PC-9 (cell line): ENCODE measurements at regions of chr5 and their contacts with region 1.

Region 1: GRCh38 chr5:72467421-72468386 is 39.5 kb downstream of the ZNF366 start:
- DNase-seq: peak; percentile 42 to 83
- H3K4me3 ChIP-seq: peak overlapping the region; percentile 38
- H3K27ac ChIP-seq: peak overlapping the region; percentile 99
- H3K4me1 ChIP-seq: peaks cover 78% of the 10 kb centered on the region
- H3K27me3 ChIP-seq: no peaks in the 10 kb centered on the region
- CTCF ChIP-seq: no peak

Region 2: GRCh38 chr5:72451741-72452505 is 15.8 kb before region 1 on chr5:
- CTCF ChIA-PET with region 1: interaction called, 3 read pairs
- POLR2A ChIA-PET with region 1: no interaction called
- intact Hi-C with region 1: loop called (anchors 1 kb)
- DNase-seq: peak; percentile 63 to 77
- H3K4me3 ChIP-seq: no peak overlapping the region
- H3K27ac ChIP-seq: peak overlapping the region; percentile 95
- H3K4me1 ChIP-seq: peaks cover 33% of the 10 kb centered on the region
- H3K27me3 ChIP-seq: no peaks in the 10 kb centered on the region
- CTCF ChIP-seq: no peak

Region 3: GRCh38 chr5:72503888-72504491 is 36.3 kb after region 1 on chr5:
- CTCF ChIA-PET with region 1: no interaction called
- POLR2A ChIA-PET with region 1: no interaction called
- intact Hi-C with region 1: loop called (anchors 2 kb)
- DNase-seq: peak; percentile 51 to 91
- H3K4me3 ChIP-seq: peak overlapping the region; percentile 34; the same call in 1 of the 2 replicates
- H3K27ac ChIP-seq: peak overlapping the region; percentile 91
- H3K4me1 ChIP-seq: peaks cover 38% of the 10 kb centered on the region
- H3K27me3 ChIP-seq: no peaks in the 10 kb centered on the region
- CTCF ChIP-seq: no peak

Region 4: GRCh38 chr5:72518001-72518683 is 50.4 kb after region 1 on chr5:
- CTCF ChIA-PET with region 1: no interaction called
- POLR2A ChIA-PET with region 1: no interaction called
- intact Hi-C with region 1: loop called (anchors 2 kb)
- DNase-seq: no peak
- H3K4me3 ChIP-seq: no peak overlapping the region
- H3K27ac ChIP-seq: no peak overlapping the region
- H3K4me1 ChIP-seq: peaks cover 25% of the 10 kb centered on the region
- H3K27me3 ChIP-seq: no peaks in the 10 kb centered on the region
- CTCF ChIP-seq: no peak

Region 5: DNA sequence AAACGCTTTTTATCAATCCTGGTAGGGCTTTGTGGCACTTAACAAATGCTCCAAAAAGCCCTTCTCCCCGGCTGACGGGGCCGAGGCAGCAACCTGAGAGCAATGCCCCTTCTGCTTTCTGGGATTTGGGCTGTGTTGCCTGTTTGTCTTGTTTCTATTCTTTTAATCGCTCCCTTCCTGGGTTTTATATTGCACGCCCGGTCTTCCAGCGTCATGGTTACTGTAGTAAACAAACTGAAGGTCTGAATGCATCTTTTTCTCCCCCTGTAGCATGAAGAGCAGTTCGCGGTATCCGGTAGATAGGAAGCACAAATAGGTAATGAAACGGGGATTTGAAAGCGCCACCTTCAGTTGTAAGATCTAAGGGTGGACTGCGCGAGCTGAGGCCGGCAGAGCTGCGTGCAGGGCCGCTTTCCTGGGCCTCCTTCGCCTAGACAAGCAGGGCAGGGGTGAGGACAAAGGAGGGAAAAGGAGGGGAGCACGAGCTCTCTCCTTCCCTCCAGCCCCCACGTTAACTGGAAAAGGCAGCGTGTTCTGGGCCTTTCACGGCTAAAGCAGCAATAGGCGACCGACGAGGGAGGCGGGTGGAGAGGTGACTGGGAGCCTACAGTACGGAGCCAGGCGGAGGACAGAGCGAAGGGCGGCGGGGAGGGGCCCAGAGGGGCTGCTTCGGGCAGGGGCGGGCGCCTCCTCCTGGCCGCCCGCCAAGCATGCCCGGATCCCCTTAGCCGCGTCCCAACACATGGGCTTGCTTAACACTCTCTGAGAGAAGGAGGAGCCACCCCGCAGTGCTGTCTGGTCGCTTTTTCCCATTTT is 88.9 kb after region 1 on chr5:
- CTCF ChIA-PET with region 1: no interaction called
- POLR2A ChIA-PET with region 1: interaction called, 10 read pairs
- intact Hi-C with region 1: no loop called
- DNase-seq: peak in 1 of 2 experiments; percentile 53
- H3K4me3 ChIP-seq: no peak overlapping the region
- H3K27ac ChIP-seq: no peak overlapping the region
- H3K4me1 ChIP-seq: peaks cover 9% of the 10 kb centered on the region; the same call in 1 of the 2 replicates
- H3K27me3 ChIP-seq: no peaks in the 10 kb centered on the region
- CTCF ChIP-seq: no peak

Region 6: DNA sequence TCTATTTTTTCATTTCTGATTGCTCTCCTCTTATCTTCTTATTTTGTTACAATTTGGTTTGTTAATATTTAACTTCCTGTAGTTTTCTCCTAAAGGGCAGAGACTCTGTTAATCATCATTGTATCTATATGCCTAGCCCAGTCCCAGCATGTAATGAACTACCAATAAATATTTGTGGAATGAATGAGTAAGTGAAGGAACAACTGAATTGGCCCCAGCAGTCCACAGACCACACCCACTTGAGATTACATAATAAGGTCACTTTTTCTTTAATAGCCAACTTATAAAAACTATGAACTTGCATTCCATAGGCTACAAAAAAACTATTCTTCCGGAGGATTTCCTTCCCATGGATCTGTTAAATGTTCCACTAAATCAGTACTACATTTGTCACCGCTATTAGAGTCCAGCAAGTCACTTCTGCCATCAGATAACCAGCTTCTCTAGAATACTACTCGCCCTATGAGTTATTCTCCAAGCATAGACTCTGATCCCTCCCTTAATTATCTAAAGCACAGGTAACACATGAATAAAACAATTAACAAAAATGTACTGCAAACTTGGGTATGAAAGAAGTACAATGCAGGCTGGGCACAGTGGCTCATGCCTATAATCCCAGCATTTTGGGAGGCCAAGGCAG is 321.3 kb after region 1 on chr5:
- CTCF ChIA-PET with region 1: no interaction called
- POLR2A ChIA-PET with region 1: no interaction called
- intact Hi-C with region 1: no loop called
- DNase-seq: peak in 1 of 2 experiments; percentile 53
- H3K4me3 ChIP-seq: no peak overlapping the region
- H3K27ac ChIP-seq: no peak overlapping the region
- H3K4me1 ChIP-seq: peaks cover 10% of the 10 kb centered on the region
- H3K27me3 ChIP-seq: no peaks in the 10 kb centered on the region
- CTCF ChIP-seq: no peak